Motor neuron (in vitro differentiated cells): ENCODE measurements at regions of chr18 and their contacts with region 1.

Region 1: GRCh38 chr18:21049306-21049705 is 62.3 kb downstream of the ROCK1 start:
- ATAC-seq: no peak
- H3K4me3 ChIP-seq: no peak overlapping the region
- H3K27ac ChIP-seq: no peak overlapping the region
- H3K4me1 ChIP-seq: no peaks in the 10 kb centered on the region

Region 2: GRCh38 chr18:21163647-21164547 is 114.6 kb after region 1 on chr18:
- in situ Hi-C with region 1: loop called in 1 of 9 experiments (anchors 25 kb)
- ATAC-seq: peak in 2 of 8 experiments; percentile 89
- H3K4me3 ChIP-seq: no peak overlapping the region
- H3K27ac ChIP-seq: no peak overlapping the region
- H3K4me1 ChIP-seq: no peaks in the 10 kb centered on the region

Region 3: DNA sequence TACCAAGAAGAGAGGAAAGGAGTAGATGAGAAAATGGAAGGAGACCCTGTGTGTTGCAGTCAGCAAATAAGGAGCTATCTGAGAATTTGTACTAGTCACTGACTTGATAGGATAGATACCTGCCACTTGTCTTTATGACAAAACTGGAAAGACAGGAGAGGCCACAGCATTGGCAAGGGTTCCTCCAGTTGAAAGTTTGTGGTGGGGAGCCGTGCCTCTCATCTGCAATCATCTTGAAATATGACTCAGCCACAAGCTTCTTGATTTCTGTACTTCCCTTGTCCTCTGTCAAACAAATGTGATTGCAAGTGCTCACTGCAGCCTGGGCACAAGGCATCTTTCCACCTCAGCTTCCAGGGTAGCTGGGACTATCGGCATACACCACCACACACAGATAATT is 291.8 kb after region 1 on chr18:
- in situ Hi-C with region 1: no loop called
- ATAC-seq: no peak
- H3K4me3 ChIP-seq: no peak overlapping the region
- H3K27ac ChIP-seq: no peak overlapping the region
- H3K4me1 ChIP-seq: peaks cover 0 to 10% of the 10 kb centered on the region in 2 donors

Region 4: DNA sequence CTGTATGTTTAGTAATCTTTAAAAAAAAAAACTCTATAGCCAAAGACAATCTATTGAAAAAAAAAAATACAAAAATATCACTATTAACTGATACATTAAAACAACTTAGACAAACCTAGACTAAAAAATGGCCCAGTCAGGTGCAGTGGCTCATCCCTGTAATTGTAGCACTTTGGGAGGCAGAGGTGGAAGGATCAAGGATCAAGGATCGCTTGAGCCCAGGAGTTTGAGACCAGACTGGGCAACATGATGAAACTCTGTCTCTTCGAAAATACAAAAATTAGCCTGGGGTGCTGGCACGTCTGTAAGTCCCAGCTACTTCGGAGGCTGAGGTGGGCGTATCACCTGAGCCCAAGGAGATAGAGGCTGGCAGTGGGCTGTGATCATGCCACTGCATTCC is 535.1 kb after region 1 on chr18:
- in situ Hi-C with region 1: no loop called
- ATAC-seq: no peak
- H3K4me3 ChIP-seq: no peak overlapping the region
- H3K27ac ChIP-seq: no peak overlapping the region
- H3K4me1 ChIP-seq: no peaks in the 10 kb centered on the region